ENCODE measurements at regions of chr1 and their contacts with region 1.

Region 1: DNA sequence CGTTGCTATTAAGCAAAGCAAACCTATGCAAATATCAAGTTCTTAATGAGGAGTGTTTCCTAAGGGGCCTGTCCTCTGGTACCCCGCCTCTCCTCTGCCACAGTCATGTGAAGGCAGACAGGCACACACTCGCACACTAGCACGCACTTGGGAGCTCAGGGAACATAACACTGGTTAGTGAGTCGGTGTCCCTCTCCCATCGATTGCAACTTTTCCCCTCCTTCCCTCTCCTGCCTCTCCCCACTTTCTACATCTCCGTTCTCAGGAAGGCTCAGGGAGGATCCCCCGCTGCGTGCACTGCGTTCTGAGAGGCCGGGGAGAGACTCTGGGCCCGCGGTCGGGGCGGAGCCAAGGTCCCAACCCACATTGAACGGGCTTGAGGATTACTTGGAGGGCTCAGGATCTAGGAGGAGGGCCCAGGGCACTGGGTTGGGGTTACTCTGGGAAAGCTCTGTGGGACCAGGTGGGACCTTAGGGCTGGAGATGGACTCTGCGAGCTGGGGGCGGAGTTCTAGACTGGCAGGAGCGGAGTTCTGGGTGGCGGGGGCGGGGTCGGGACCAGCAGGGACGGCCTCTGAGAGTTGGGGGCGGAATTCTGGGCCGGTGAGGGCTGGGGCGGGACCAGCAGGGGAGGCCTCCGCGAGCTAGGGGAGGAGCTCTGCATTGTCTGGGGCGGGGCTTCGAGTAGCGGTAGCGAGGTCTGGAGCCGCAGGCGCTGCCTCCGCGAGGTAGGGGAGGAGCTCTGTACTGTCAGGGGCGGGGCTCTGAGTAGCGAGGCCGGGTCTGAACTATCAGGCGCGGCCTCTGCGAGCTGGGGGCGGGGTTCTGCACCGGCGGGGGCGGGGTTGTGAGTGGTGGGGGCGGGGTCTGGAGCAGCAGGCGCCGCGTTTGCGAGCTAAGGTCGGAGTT is 533 bp upstream of the LEPR start:
- DNase-seq: peak; percentile 99
- ATAC-seq: peak; percentile 93
- H3K4me3 Mint-ChIP-seq: no peak overlapping the region; the same call in none of the 2 replicates
- H3K27ac Mint-ChIP-seq: peak overlapping the region; percentile 97
- H3K4me1 Mint-ChIP-seq: peaks cover 34% of the 10 kb centered on the region
- H3K27me3 Mint-ChIP-seq: no peaks in the 10 kb centered on the region
- CTCF ChIP-seq: no peak

Region 2: GRCh38 chr1:65309304-65310077 is 110.4 kb before region 1 on chr1 and contains the start of gene DNAJC6:
- CTCF ChIA-PET with region 1: interaction called, 12 read pairs
- POLR2A ChIA-PET with region 1: interaction called, 12 read pairs
- DNase-seq: peak; percentile 93
- ATAC-seq: peak; percentile 90
- H3K4me3 Mint-ChIP-seq: peak within 1 kb of the TSS; percentile 95
- H3K27ac Mint-ChIP-seq: peak within 1 kb of the TSS; percentile 70
- H3K4me1 Mint-ChIP-seq: peaks cover 29% of the 10 kb centered on the region
- H3K27me3 Mint-ChIP-seq: peaks cover 17% of the 10 kb centered on the region
- CTCF ChIP-seq: no peak
- total RNA-seq, gene DNAJC6: 6.0 to 9.1 TPM (median 7.6 TPM) in 3 replicates

Region 3: GRCh38 chr1:65362545-65362944 is 57.4 kb before region 1 on chr1:
- CTCF ChIA-PET with region 1: no interaction called
- POLR2A ChIA-PET with region 1: no interaction called
- DNase-seq: no peak
- ATAC-seq: peak; percentile 80
- H3K4me3 Mint-ChIP-seq: no peak overlapping the region
- H3K27ac Mint-ChIP-seq: 0 out of 2 replicates have a peak overlapping the region, but pooled peaks have one; percentile 2
- H3K4me1 Mint-ChIP-seq: peaks cover 12% of the 10 kb centered on the region
- H3K27me3 Mint-ChIP-seq: no peaks in the 10 kb centered on the region
- CTCF ChIP-seq: no peak

Region 4: DNA sequence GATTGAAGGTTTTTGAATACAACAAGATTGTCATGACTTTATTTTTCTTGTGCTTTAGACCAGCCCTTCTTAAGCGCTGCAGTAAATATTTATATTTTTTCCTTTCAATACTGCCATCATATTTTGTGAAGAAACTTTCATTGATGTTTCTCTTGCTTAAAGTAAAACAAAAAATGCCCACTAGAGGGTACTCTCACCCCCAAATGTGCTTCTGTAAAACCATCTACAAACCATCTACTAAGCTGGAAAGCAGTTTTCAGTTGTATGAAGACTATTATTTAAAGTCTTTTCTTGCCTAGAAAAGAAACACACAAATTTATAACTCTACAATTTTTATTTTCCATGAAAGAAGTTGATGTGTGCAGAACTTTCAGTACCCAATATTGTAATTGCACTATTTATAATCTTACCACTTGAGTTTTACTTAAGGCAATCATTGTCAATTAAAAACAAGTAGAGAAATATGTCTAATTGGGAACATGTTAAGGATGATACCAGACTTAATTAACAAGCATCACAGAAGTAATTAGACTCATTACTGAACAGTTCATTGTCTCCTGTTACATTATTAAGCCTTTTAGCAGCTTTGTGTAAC is 11.3 kb after region 1 on chr1:
- CTCF ChIA-PET with region 1: interaction called, 10 read pairs
- POLR2A ChIA-PET with region 1: no interaction called
- DNase-seq: no peak
- ATAC-seq: no peak
- H3K4me3 Mint-ChIP-seq: no peak overlapping the region
- H3K27ac Mint-ChIP-seq: no peak overlapping the region
- H3K4me1 Mint-ChIP-seq: peaks cover 41% of the 10 kb centered on the region
- H3K27me3 Mint-ChIP-seq: no peaks in the 10 kb centered on the region
- CTCF ChIP-seq: peak; percentile 43